Activated CD4-positive, alpha-beta memory T cell treated with anti-CD3 and anti-CD28 coated beads for 36 hours (primary cell): ENCODE measurements at regions of chr7 and their contacts with region 1.

Region 1: DNA sequence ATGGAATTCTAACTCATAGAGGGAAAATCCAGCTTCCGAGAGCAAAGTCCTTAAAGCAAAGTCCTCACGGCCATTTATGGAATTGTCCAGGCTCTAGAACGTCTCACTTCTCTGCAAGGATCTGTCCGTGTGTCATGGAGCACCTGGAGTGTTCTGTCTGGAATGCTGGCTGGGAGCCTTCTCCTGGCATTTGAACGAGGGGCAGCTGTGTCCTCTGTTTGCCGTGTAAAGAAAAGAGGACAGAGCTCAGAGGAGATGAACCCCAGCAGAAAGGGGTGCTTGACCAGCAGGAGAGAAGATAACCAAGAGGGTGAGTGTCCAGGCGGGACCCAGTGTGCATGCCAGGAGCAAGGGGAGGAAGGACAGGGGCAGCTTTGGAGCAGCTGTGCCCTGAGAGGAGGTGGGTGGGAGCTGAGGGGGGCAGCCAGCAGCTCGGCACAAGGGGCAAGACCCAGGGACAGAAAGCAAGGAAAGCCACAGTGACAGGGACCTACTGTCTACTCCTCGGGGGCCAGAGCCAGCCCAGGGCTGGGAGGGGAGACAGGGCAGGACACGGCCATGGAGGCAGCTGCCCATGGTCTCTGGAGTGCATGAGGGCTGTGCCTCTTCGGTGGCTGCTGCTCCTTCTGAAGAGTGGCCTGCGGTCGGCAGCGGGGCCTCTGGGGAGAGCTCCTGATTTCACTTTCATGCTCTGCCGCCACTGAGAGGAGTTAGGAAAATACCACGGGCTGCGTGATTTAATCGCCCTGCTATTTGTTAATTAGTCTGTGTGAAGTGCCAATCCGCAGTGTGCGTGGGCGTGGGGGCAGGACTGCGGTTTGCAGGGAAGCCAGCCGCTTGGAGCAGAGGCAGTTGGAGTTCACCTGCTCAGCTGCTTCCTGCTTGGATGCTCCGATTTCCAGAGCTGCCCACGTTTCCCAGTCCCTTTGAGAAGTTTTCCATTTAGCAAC is 149.3 kb upstream of the SHH start:
- DNase-seq: peak; percentile 58
- H3K4me3 Mint-ChIP-seq: no peak overlapping the region
- H3K27ac Mint-ChIP-seq: no peak overlapping the region
- H3K4me1 Mint-ChIP-seq: peaks cover 23% of the 10 kb centered on the region
- H3K27me3 Mint-ChIP-seq: peaks cover 26% of the 10 kb centered on the region

Region 2: DNA sequence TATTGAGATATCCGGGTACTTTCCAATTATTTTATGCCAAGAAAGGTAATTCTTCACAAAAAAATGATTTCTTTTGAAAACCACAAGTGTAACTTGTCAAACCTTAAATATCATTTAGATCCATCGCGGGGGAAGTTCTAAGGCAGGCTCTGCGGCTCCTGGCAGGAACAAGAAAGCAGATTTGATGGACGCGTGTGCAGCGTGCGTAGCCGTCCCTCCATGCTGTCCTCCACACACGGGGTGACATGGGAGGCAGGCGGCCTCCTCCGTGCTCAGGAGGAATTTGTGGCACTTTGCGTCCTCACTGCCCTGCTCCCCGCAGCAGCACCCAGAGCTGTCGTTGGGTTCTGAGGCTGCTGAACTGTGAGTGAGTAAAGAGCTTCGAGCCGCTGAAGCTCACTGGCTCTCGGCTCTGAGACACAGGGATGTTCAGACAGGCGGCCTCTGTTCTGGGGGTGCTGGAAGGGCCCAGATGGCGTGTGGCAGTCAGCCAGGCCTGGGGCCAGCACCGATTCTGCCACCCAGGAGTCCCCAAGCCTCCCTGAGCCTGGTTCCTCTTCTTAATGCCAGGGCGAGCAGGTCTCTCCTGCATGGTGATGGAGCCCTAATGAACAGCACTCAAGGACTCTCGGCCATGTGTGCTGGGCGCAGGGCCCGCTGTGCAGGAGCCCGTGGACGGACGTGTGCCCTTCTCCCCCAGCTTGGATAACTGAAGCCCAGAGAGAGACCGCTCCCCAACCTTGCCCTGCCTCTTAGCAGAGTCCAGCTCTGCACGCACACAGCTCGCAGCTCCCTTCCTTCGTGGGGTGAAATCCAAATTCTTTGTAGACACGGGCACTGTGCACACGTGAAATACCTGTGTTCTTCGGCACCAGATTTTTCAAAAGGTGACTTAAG is 36.2 kb after region 1 on chr7:
- CTCF ChIA-PET with region 1: no interaction called
- POLR2A ChIA-PET with region 1: no interaction called
- intact Hi-C with region 1: loop called (anchors 2 kb)
- DNase-seq: no peak
- H3K4me3 Mint-ChIP-seq: no peak overlapping the region
- H3K27ac Mint-ChIP-seq: no peak overlapping the region
- H3K4me1 Mint-ChIP-seq: peaks cover 33% of the 10 kb centered on the region
- H3K27me3 Mint-ChIP-seq: peaks cover 52% of the 10 kb centered on the region

Region 3: GRCh38 chr7:156100086-156100485 is 138.6 kb after region 1 on chr7:
- CTCF ChIA-PET with region 1: no interaction called
- POLR2A ChIA-PET with region 1: no interaction called
- intact Hi-C with region 1: no loop called
- DNase-seq: no peak
- H3K4me3 Mint-ChIP-seq: no peak overlapping the region
- H3K27ac Mint-ChIP-seq: no peak overlapping the region
- H3K4me1 Mint-ChIP-seq: no peaks in the 10 kb centered on the region
- H3K27me3 Mint-ChIP-seq: peaks cover 2% of the 10 kb centered on the region